ENCODE measurements at regions of chr3 and their contacts with region 1.

Region 1: DNA sequence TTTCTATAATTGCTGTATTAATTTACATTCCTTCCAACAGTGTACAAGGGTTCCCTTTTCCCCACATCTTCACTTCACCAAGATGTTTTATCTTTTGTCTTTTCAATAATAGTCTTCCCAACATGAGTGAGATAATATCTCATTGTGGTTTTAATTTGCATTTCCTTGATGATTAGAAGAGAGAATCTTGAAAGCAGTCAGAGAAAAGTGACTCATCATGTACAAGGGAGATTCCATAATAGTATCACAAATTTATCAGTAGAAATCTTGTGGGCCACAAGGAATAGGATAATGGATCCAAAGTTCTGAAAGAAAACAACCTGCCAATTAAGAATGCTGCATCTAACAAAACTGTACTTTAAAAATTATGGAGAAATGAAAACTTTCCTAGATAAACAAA is 189.3 kb downstream of the NECTIN3 start:
- DNase-seq: no peak
- H3K4me3 Mint-ChIP-seq: no peak overlapping the region
- H3K27ac Mint-ChIP-seq: no peak overlapping the region
- H3K4me1 Mint-ChIP-seq: peaks cover 17% of the 10 kb centered on the region
- H3K27me3 Mint-ChIP-seq: peaks cover 58% of the 10 kb centered on the region

Region 2: DNA sequence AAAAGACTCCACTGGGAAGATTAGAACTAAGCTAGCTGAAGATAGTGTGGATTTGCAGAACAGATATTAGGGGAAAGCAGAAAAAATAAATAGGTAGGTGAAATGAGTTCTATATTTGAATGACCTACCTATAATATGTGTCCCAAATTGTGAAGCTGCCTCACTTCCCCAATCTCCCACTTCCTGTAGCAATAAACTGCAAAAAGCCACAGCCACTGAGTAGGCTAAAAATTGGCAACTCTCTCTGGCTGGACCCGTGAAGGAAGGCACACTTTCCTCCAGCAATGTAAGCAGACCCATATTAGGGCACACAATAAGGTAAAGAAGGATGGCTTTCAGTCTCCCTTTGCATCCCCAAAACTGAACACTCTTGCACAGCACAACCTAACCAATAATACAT is 233.0 kb before region 1 on chr3:
- intact Hi-C with region 1: no loop called
- DNase-seq: no peak
- H3K4me3 Mint-ChIP-seq: no peak overlapping the region
- H3K27ac Mint-ChIP-seq: no peak overlapping the region
- H3K4me1 Mint-ChIP-seq: no peaks in the 10 kb centered on the region
- H3K27me3 Mint-ChIP-seq: peaks cover 7% of the 10 kb centered on the region

Region 3: GRCh38 chr3:111080413-111080812 is 180.5 kb before region 1 on chr3:
- intact Hi-C with region 1: no loop called
- DNase-seq: no peak
- H3K4me3 Mint-ChIP-seq: no peak overlapping the region
- H3K27ac Mint-ChIP-seq: no peak overlapping the region
- H3K4me1 Mint-ChIP-seq: no peaks in the 10 kb centered on the region
- H3K27me3 Mint-ChIP-seq: peaks cover 15% of the 10 kb centered on the region

Region 4: DNA sequence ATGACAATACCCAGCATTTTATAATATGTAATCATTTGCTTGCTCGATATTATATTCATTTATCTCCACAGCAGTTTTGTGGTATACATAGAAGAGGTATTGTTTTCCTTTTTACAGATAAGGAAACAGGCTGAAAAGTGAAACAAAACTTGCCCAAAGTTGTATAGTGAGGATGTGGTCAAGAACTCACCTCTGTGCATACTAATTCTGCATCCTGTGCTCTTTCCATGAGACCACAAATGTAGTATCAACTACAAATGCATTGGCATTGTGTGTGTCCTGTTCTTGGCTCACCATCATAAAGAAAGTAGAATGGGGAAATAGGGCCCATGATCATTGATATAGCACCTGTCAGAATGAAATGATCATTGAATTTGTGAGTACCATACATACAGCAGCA is 22.0 kb before region 1 on chr3:
- intact Hi-C with region 1: loop called (anchors 2 kb)
- DNase-seq: peak; percentile 40
- H3K4me3 Mint-ChIP-seq: no peak overlapping the region
- H3K27ac Mint-ChIP-seq: no peak overlapping the region
- H3K4me1 Mint-ChIP-seq: peaks cover 26% of the 10 kb centered on the region
- H3K27me3 Mint-ChIP-seq: peaks cover 6% of the 10 kb centered on the region

Region 5: DNA sequence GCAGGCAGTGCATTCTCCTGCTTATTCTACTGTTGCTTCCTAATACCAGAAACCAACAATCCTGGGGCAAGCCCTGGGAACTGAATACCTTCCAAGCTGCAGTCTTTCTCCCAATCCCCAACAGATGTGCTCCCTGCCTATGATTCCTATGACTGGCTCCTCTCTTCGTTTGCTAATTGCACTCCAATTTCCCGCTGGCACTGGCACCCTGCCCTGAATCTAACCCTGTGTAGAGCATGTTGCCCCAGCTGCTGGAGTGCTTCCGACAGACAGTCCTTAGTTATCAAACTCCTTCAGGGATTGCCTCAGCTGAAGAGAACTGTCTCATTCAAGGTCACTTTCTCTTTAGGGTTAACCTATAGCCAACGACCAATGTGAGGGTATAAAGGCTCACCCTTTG is 24.8 kb after region 1 on chr3:
- intact Hi-C with region 1: no loop called
- DNase-seq: no peak
- H3K4me3 Mint-ChIP-seq: no peak overlapping the region
- H3K27ac Mint-ChIP-seq: no peak overlapping the region
- H3K4me1 Mint-ChIP-seq: peaks cover 24% of the 10 kb centered on the region
- H3K27me3 Mint-ChIP-seq: peaks cover 17% of the 10 kb centered on the region

Region 6: GRCh38 chr3:111311709-111312235 is 50.9 kb after region 1 on chr3:
- intact Hi-C with region 1: loop called (anchors 1 kb)
- DNase-seq: no peak
- H3K4me3 Mint-ChIP-seq: peak overlapping the region; percentile 18
- H3K27ac Mint-ChIP-seq: peak overlapping the region; percentile 77
- H3K4me1 Mint-ChIP-seq: peaks cover 39% of the 10 kb centered on the region
- H3K27me3 Mint-ChIP-seq: no peaks in the 10 kb centered on the region